ENCODE measurements at regions of chr4 and their contacts with region 1.

Region 1: GRCh38 chr4:183905081-183905592 is at the start of gene STOX2:
- DNase-seq: peak; percentile 85 to 92 (median 91)
- ATAC-seq: peak; percentile 93 to 97 (median 95)
- H3K4me3 ChIP-seq: peak within 1 kb of the TSS; percentile 63 to 88 (median 77)
- H3K27ac ChIP-seq: peak within 1 kb of the TSS; percentile 63 to 94 (median 87)
- H3K4me1 ChIP-seq: peaks cover 0 to 42% (median 16%) of the 10 kb centered on the region in 12 donors
- H3K27me3 ChIP-seq: peaks cover 0 to 27% (median 0%) of the 10 kb centered on the region in 9 donors
- CTCF ChIP-seq: no peak
- POLR2A ChIP-seq: peak in 1 of 2 donors; percentile 85
- total RNA-seq, gene STOX2: 11.5 to 19.6 (median 13.5) TPM

Region 2: DNA sequence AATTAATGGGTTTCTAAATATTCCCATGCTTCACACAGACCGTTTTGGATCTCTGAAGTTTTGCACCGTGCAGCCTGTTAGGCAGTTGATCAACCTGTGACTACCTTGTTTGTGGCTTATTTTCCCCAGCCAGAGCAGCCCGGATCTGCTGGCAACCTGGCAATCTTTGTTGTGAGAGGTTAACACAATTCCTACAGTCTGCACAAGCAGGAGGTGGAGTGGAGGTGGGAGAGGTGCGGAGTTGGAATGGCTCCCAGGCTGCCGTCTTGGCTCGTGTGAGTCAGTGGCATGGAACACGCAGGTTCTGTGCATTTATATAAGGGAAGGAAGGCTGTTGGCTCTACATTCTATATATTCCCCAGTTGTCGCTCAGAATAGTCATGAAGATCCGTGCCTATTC is 70.9 kb before region 1 on chr4:
- intact Hi-C with region 1: no loop called
- DNase-seq: no peak
- ATAC-seq: no peak
- H3K4me3 ChIP-seq: no peak overlapping the region
- H3K27ac ChIP-seq: no peak overlapping the region
- H3K4me1 ChIP-seq: peaks cover 0 to 40% (median 21%) of the 10 kb centered on the region in 12 donors
- H3K27me3 ChIP-seq: no peaks in the 10 kb centered on the region
- CTCF ChIP-seq: no peak
- POLR2A ChIP-seq: no peak

Region 3: GRCh38 chr4:183876268-183876934 is 28.7 kb before region 1 on chr4:
- intact Hi-C with region 1: loop called in 2 of 10 experiments (anchors 1 to 2 kb)
- DNase-seq: peak; percentile 86 to 96 (median 89)
- ATAC-seq: peak; percentile 94 to 96 (median 94)
- H3K4me3 ChIP-seq: peak overlapping the region in 11 of 12 donors; percentile 14 to 65 (median 47)
- H3K27ac ChIP-seq: peak overlapping the region; percentile 68 to 95 (median 85)
- H3K4me1 ChIP-seq: peaks cover 0 to 29% (median 13%) of the 10 kb centered on the region in 12 donors
- H3K27me3 ChIP-seq: no peaks in the 10 kb centered on the region
- CTCF ChIP-seq: no peak
- POLR2A ChIP-seq: peak in 1 of 2 donors; percentile 19

Region 4: DNA sequence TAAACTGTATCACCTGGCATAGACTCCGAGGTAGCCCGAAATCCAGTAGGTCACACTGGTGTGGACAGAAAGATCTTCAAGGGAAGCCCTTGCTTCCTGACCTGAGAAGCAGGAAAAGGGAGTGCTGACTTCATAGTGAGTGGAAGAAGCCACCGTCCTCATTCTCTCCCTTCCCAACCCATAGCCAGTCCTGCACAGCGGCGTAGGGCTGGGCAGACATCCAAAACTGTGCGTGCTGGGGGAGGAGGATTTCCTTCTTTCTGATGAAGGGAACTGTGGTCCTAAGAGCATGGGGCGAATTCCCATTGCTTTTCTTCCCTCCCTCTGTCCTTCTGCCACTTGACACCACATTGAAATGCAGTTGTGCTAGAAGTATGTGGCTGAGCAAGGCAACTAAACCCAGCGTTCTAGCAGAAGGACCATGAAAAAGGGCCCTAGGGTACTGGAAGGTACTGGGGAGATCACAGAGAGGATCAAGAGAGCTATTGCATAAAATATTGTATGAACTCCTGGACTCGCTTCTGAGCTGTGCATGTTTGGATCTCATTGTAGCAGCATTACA is 66.9 kb after region 1 on chr4:
- intact Hi-C with region 1: no loop called
- DNase-seq: peak; percentile 56 to 75 (median 64)
- ATAC-seq: peak; percentile 68 to 89 (median 87)
- H3K4me3 ChIP-seq: peak overlapping the region in 2 of 12 donors; percentile 5 to 17
- H3K27ac ChIP-seq: peak overlapping the region in 2 of 12 donors; percentile 9 to 42
- H3K4me1 ChIP-seq: peaks cover 0 to 23% (median 14%) of the 10 kb centered on the region in 12 donors
- H3K27me3 ChIP-seq: no peaks in the 10 kb centered on the region
- CTCF ChIP-seq: no peak
- POLR2A ChIP-seq: no peak

Region 5: GRCh38 chr4:183987987-183988392 is 82.9 kb after region 1 on chr4:
- intact Hi-C with region 1: loop called in 8 of 10 experiments (anchors 2 to 10 kb)
- DNase-seq: peak; percentile 67 to 88 (median 82)
- ATAC-seq: peak; percentile 90 to 94 (median 92)
- H3K4me3 ChIP-seq: peak overlapping the region; percentile 12 to 56 (median 48)
- H3K27ac ChIP-seq: peak overlapping the region; percentile 63 to 94 (median 86)
- H3K4me1 ChIP-seq: peaks cover 0 to 72% (median 22%) of the 10 kb centered on the region in 12 donors
- H3K27me3 ChIP-seq: no peaks in the 10 kb centered on the region
- CTCF ChIP-seq: no peak
- POLR2A ChIP-seq: peak in 1 of 2 donors; percentile 73

Region 6: GRCh38 chr4:184100297-184100885 is 195.3 kb after region 1 on chr4:
- intact Hi-C with region 1: loop called in 2 of 10 experiments (anchors 1 to 5 kb)
- DNase-seq: peak; percentile 26 to 85 (median 46)
- ATAC-seq: peak; percentile 57 to 80 (median 70)
- H3K4me3 ChIP-seq: no peak overlapping the region
- H3K27ac ChIP-seq: no peak overlapping the region
- H3K4me1 ChIP-seq: peaks cover 0 to 35% (median 12%) of the 10 kb centered on the region in 12 donors
- H3K27me3 ChIP-seq: no peaks in the 10 kb centered on the region
- CTCF ChIP-seq: peak in 11 of 12 donors; percentile 53 to 91 (median 65)
- POLR2A ChIP-seq: no peak

Region 7: DNA sequence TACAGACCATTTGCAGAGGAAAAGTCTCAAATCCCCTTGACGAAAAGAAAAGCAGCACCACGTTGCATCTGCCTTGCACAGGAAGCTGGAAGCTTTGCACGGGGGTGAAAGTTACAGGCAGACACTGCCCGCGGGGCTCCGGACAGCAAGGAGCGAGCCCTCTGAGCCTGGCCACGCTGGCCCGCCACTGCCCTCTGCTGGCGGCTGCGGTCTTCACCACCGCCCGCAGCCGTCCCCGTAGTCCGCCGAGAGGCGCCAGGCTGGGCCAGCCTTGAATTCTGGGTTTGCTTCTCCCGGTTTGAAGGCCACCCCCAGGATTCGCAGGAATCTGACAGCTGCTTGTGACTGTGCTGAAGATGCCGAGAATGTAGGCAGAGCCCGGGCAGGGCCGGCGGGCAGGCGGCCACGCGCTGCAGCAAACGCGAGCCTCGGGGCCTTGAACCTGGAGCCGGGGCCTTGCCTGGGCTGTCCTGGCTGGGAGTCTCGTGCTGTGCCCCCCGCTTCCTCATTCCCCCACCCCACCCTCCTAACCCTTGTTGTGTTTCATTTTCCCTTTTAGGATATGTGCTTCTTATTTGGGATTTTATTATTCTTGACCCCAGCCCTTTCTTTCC is 263.4 kb after region 1 on chr4:
- intact Hi-C with region 1: loop called in 2 of 10 experiments (anchors 5 to 10 kb)
- DNase-seq: peak; percentile 72 to 90 (median 79)
- ATAC-seq: peak; percentile 73 to 96 (median 96)
- H3K4me3 ChIP-seq: peak overlapping the region in 4 of 12 donors; percentile 1 to 38 (median 18)
- H3K27ac ChIP-seq: no peak overlapping the region
- H3K4me1 ChIP-seq: peaks cover 0 to 7% (median 1%) of the 10 kb centered on the region in 12 donors
- H3K27me3 ChIP-seq: peaks cover 0 to 27% (median 0%) of the 10 kb centered on the region in 9 donors
- CTCF ChIP-seq: peak; percentile 88 to 99 (median 96)
- POLR2A ChIP-seq: no peak

Measured in heart left ventricle (tissue), 16 donors.